CD14-positive monocyte (primary cell): ENCODE measurements at regions of chr10 and their contacts with region 1.

Region 1: GRCh38 chr10:70272925-70273316 is 10.9 kb downstream of the NPFFR1 start:
- DNase-seq: peak in 2 of 3 donors; percentile 33 to 51
- H3K4me3 ChIP-seq: no peak overlapping the region
- H3K4me3 Mint-ChIP-seq: peak overlapping the region in 1 of 2 donors; percentile 42
- H3K27ac ChIP-seq: no peak overlapping the region
- H3K27ac Mint-ChIP-seq: no peak overlapping the region
- H3K4me1 ChIP-seq: peaks cover 36 to 48% of the 10 kb centered on the region in 2 donors
- H3K4me1 Mint-ChIP-seq: peaks cover 46% of the 10 kb centered on the region
- H3K27me3 ChIP-seq: no peaks in the 10 kb centered on the region
- H3K27me3 Mint-ChIP-seq: peaks cover 3 to 7% (median 3%) of the 10 kb centered on the region in 3 donors
- CTCF ChIP-seq: peak; percentile 81

Region 2: DNA sequence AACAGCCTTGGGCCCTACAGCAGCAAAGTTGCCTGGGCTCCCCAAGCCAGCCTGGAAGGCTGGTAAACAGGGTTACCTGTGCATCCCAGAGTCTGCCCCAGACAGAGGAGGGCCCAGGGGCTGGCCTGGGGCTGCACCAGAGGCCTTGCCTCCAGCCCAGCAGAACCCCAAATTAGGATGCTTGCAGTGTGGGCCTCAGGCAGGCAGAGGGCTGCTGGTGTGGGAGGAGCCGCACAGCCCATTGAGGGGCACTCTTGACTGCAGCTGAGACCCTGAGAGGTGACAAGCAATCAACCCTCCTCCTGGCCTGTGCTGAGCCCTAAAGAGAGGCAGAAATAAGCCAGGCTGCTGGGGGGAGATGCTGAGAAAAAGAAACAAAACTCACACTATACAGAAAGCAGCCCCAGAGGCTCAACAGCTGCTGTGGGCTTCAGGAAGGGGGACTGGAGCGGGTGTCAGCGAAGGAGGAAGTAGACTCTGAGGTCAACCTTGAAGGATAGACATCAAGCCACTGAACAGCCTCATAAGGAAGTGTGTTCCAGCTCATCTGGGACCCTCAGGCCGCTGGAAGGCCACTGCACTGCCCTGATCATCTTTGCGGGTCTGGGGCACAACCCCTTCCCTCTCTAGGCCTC is 146.9 kb before region 1 on chr10:
- intact Hi-C with region 1: no loop called
- DNase-seq: no peak
- H3K4me3 ChIP-seq: no peak overlapping the region
- H3K4me3 Mint-ChIP-seq: no peak overlapping the region
- H3K27ac ChIP-seq: no peak overlapping the region
- H3K27ac Mint-ChIP-seq: no peak overlapping the region
- H3K4me1 ChIP-seq: peaks cover 0 to 3% of the 10 kb centered on the region in 2 donors
- H3K4me1 Mint-ChIP-seq: peaks cover 12% of the 10 kb centered on the region
- H3K27me3 ChIP-seq: no peaks in the 10 kb centered on the region
- H3K27me3 Mint-ChIP-seq: peaks cover 0 to 5% (median 2%) of the 10 kb centered on the region in 3 donors
- CTCF ChIP-seq: no peak

Region 3: GRCh38 chr10:70250961-70251680 is 21.8 kb before region 1 on chr10:
- intact Hi-C with region 1: loop called in 1 of 2 experiments (anchors 1 kb)
- DNase-seq: no peak
- H3K4me3 ChIP-seq: no peak overlapping the region
- H3K4me3 Mint-ChIP-seq: no peak overlapping the region
- H3K27ac ChIP-seq: no peak overlapping the region
- H3K27ac Mint-ChIP-seq: peak overlapping the region in 1 of 7 donors; percentile 18
- H3K4me1 ChIP-seq: peaks cover 12 to 15% of the 10 kb centered on the region in 2 donors
- H3K4me1 Mint-ChIP-seq: peaks cover 12% of the 10 kb centered on the region
- H3K27me3 ChIP-seq: peaks cover 42 to 49% of the 10 kb centered on the region in 2 donors
- H3K27me3 Mint-ChIP-seq: peaks cover 40 to 56% (median 45%) of the 10 kb centered on the region in 3 donors
- CTCF ChIP-seq: no peak

Region 4: GRCh38 chr10:70363971-70364771 is 91.2 kb after region 1 on chr10:
- intact Hi-C with region 1: loop called (anchors 5 kb)
- DNase-seq: peak; percentile 89 to 95 (median 94)
- H3K4me3 ChIP-seq: peak overlapping the region in 1 of 3 experiments; percentile 2
- H3K4me3 Mint-ChIP-seq: peak overlapping the region in 1 of 2 donors; percentile 59
- H3K27ac ChIP-seq: peak overlapping the region; percentile 27 to 46
- H3K27ac Mint-ChIP-seq: peak overlapping the region; percentile 35 to 88 (median 87)
- H3K4me1 ChIP-seq: peaks cover 29 to 38% of the 10 kb centered on the region in 2 donors
- H3K4me1 Mint-ChIP-seq: peaks cover 36% of the 10 kb centered on the region
- H3K27me3 ChIP-seq: no peaks in the 10 kb centered on the region
- H3K27me3 Mint-ChIP-seq: peaks cover 0 to 2% (median 2%) of the 10 kb centered on the region in 3 donors
- CTCF ChIP-seq: peak; percentile 93